Activated CD4-positive, alpha-beta T cell treated with anti-CD3 and anti-CD28 coated beads, Interleukin-2, amount 10 ng/mL, durations not matched to agents 24 days and 14 days (primary cell): ENCODE measurements at regions of chr6 and their contacts with region 1.

Region 1: DNA sequence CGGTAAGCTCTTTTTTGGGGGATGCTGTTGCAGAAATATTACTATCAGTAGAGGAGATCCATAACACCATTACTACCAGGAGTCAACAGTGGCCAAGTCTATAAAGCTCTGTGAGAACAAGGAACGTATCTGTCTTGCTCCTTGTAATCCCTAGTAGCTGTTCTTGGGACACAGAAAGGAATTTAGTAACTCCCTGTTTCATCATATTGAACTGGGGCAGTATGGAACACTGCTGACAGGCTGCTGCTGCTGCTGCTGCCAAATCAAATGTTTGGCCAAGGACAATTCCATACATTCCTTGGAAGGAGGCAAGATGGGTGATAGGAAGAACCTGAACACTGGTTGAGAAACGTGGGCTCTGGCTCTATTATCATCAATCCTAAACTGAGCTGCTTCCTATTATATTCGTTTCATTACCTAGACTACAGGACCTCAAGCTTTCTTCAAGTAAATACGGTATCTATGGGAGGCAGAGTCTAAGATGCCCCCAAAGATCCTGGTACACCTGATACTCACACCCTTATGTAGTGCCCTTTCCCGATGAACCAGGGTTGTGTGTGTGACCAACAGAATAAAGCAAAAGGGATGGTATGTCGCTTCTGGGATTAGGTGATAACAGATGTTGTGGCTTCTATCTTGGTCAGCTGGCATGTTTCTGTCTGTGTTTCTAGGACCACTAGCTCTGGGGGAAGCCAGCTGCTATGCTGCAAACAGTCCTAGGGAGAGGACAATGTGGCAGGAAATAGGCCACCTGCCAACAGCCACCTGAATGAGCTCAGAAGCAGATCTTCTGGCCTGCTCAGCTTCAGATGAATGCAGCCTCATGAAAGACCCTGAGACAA is 39.5 kb downstream of the ELOVL5 start:
- DNase-seq: no peak
- H3K4me3 Mint-ChIP-seq: no peak overlapping the region
- H3K27ac Mint-ChIP-seq: peak overlapping the region; percentile 32
- H3K4me1 Mint-ChIP-seq: peaks cover 63% of the 10 kb centered on the region
- H3K27me3 Mint-ChIP-seq: no peaks in the 10 kb centered on the region

Region 2: GRCh38 chr6:52984247-52984646 is 325.0 kb before region 1 on chr6:
- intact Hi-C with region 1: loop called (anchors 5 kb)
- DNase-seq: peak; percentile 84
- H3K4me3 Mint-ChIP-seq: peak overlapping the region; percentile 25
- H3K27ac Mint-ChIP-seq: peak overlapping the region; percentile 92
- H3K4me1 Mint-ChIP-seq: peaks cover 59% of the 10 kb centered on the region
- H3K27me3 Mint-ChIP-seq: peaks cover 2% of the 10 kb centered on the region

Region 3: DNA sequence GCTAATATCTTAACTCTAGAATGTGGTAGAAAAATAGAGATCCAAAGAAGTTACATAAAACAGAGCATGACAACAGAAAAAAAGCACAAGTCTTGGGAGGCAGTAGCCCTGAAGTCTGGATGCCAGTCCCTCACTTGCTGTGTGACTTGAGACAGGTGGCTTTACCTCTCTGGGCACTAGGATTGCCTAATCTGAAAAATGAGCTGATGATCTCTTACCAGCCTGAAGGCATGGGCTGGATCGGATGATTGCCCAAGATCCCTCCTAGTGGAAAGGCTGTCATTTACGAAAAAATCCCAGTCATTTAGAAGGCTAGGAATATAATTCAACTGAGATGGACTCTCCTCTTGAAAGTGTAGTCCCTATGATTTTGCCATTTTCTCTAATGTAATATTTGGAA is 149.7 kb before region 1 on chr6:
- intact Hi-C with region 1: no loop called
- DNase-seq: no peak
- H3K4me3 Mint-ChIP-seq: no peak overlapping the region
- H3K27ac Mint-ChIP-seq: no peak overlapping the region
- H3K4me1 Mint-ChIP-seq: peaks cover 4% of the 10 kb centered on the region
- H3K27me3 Mint-ChIP-seq: no peaks in the 10 kb centered on the region

Region 4: DNA sequence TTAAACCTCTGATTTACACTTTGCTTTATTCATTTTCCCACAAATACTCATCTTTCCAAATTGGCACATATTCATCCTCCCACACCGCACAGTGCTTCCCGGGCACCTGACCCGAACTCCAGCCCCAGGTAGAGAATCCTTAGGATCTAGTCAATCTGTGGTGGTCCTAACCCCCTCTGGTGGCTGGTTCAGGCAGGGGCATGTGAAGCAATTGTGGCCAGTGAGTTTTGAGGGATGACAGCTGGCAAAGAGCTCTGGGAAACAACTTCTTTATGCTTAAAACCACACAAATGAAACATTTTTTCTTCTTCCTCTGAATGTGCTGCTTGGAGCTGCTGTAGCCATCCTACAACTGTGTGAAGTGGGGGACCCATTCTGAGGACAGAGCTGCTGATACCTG is 15.2 kb before region 1 on chr6:
- intact Hi-C with region 1: no loop called
- DNase-seq: no peak
- H3K4me3 Mint-ChIP-seq: no peak overlapping the region
- H3K27ac Mint-ChIP-seq: peak overlapping the region; percentile 42
- H3K4me1 Mint-ChIP-seq: peaks cover 44% of the 10 kb centered on the region
- H3K27me3 Mint-ChIP-seq: no peaks in the 10 kb centered on the region

Region 5: DNA sequence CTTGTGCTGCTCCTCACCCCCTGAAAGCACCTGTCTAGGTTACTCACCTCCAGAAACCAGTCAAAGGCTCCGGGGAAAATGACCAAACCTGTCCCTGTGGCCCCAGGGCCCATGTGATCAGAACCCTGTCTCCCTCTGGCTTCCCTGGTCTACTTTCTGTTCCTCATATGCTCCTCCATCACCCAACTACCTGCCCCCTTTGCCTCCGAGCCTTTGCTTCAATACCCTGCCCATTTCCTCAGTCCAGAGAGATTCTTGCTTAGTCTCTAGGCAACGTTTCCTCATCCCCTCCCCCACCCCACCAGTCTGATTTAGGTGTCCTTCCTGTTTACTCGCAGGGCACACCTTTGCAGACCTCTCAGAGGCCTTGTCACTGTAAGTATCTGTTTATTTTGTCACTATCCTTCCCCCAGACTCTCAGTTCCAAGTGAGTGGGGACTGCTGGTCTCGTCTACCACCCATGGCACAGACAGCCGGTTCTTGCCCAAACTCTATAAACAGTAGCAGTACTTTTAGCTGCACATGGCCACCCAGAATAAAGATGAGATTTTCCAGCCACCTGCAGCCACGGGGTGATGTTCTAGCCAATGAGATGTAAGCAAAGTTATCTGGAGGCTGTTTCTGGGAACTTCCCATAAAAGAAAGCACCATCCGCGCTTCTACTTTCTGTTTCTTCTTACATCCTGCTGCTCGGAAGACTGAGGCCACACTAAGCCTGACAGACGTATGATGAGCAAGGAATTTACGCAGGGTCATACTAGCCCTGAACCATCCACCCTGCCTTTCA is 26.1 kb after region 1 on chr6:
- intact Hi-C with region 1: loop called (anchors 1 kb)
- DNase-seq: peak; percentile 92
- H3K4me3 Mint-ChIP-seq: peak overlapping the region; percentile 81
- H3K27ac Mint-ChIP-seq: peak overlapping the region; percentile 97
- H3K4me1 Mint-ChIP-seq: peaks cover 67% of the 10 kb centered on the region
- H3K27me3 Mint-ChIP-seq: no peaks in the 10 kb centered on the region

Region 6: DNA sequence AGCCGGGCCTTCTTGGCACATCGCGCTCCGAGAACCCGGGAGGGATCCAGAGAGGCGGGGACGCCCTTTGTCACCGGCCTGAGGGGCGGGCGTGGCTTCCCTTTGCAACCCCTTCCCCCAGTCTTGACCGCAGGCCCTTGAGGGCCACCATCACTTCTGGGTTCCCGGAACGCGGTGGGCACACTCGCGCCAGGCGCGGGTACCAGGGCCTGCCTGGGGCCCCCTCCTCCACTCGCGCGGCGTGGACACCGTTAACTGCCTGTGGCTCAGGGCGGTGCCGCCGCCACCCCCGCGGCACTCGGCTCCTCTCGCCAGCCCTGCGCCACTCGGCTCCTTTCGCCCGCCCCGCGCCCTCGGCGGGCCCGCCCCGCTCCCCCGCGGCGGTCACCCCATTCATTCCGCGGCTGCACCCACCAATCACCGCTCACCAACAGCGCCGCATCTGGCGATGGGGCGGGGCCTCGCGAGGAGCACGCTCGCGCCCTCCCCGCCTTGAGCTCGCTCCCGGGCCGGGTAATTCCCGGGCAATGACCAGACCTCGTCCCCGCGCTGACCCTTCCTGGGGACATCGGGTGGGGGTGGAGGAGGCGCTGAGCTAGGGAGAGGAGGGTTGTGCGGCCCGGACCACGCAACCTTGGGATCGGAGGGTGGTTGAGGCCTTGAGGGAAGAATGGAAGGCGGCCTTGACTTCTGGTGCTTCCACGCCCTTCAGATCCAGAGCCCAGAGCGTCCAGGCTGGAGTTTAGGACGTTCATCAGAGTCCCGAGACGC is 50.0 kb after region 1 on chr6:
- intact Hi-C with region 1: loop called (anchors 2 kb)
- DNase-seq: peak; percentile 98
- H3K4me3 Mint-ChIP-seq: peak overlapping the region; percentile 92
- H3K27ac Mint-ChIP-seq: peak overlapping the region; percentile 100
- H3K4me1 Mint-ChIP-seq: peaks cover 39% of the 10 kb centered on the region
- H3K27me3 Mint-ChIP-seq: peaks cover 6% of the 10 kb centered on the region

Region 7: DNA sequence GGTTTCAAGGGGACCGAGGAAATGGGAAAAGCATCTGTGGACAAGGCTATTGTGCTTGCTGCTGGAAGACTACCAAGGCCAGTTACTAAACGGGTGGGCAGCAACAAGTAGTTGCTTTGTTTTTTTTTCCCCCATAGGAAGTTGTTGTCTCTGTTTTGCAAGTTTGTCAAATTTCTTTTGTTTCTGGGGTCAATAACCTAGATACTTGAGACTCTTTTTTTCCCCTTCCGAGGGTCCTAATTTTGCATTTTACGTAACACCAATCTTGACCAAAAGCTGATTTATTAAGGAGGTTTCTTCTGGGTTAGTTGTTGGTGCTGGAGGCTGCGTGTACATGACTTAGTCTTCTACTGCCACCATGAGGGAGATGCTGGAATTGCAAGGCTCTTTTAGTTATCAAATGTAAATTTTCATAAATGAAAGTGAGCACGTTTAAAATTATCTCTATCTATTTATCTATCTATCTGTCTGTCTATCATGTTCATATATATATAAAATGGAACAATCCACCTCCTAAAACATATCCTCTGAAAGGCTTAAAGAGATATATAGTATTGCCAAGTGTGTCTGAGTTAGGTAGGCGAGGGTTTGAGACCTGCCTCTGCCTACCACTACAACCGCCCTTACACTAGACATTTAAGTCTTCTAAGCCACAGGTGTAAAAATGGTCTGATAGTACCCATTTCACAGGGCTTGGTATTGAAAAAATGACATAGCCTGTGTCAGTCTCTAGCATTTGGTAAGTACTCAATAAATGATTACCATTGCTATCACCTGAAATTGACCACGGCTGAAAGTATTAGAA is 175.4 kb after region 1 on chr6:
- intact Hi-C with region 1: loop called (anchors 5 kb)
- DNase-seq: peak; percentile 91
- H3K4me3 Mint-ChIP-seq: no peak overlapping the region
- H3K27ac Mint-ChIP-seq: no peak overlapping the region
- H3K4me1 Mint-ChIP-seq: peaks cover 18% of the 10 kb centered on the region
- H3K27me3 Mint-ChIP-seq: peaks cover 33% of the 10 kb centered on the region